ENCODE measurements at regions of chr5 and their contacts with region 1.

Region 1: DNA sequence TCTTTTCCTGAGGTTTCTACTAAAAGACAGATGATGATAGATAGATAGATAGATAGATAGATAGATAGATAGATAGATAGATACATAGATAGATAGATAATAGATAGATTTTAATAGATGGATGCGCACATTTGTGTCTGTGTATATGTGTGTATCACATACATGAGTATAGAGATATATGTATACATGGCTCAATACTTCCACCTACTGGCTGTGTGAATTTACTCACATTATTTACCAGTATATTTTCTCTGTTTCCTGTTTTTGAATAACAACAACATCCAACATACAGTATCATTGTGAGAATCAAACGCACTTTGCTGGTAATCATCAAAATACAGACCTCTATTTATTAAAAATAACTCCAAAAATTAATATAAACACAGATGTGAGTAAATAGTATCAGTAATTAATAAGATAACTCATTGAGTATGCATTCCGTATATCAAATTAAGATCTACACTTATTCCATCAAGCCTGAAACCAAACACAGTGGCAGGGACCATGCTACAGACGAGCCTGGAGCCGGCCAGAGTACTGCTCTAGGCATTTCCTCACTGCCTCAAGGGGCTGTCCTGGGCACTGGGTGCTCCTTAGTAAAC is 338.0 kb downstream of the SEMA5A start:
- DNase-seq: no peak
- H3K4me3 ChIP-seq: no peak overlapping the region
- H3K27ac ChIP-seq: no peak overlapping the region
- H3K4me1 ChIP-seq: no peaks in the 10 kb centered on the region
- H3K27me3 ChIP-seq: no peaks in the 10 kb centered on the region
- CTCF ChIP-seq: peak in 4 of 6 experiments; percentile 19 to 79 (median 60)
- POLR2A ChIP-seq: no peak

Region 2: GRCh38 chr5:8756498-8757084 is 451.3 kb before region 1 on chr5:
- intact Hi-C with region 1: loop called (anchors 5 kb)
- DNase-seq: peak; percentile 11 to 38
- H3K4me3 ChIP-seq: no peak overlapping the region
- H3K27ac ChIP-seq: no peak overlapping the region
- H3K4me1 ChIP-seq: no peaks in the 10 kb centered on the region
- H3K27me3 ChIP-seq: no peaks in the 10 kb centered on the region
- CTCF ChIP-seq: peak in 4 of 6 experiments; percentile 24 to 49 (median 43)
- POLR2A ChIP-seq: no peak

Region 3: DNA sequence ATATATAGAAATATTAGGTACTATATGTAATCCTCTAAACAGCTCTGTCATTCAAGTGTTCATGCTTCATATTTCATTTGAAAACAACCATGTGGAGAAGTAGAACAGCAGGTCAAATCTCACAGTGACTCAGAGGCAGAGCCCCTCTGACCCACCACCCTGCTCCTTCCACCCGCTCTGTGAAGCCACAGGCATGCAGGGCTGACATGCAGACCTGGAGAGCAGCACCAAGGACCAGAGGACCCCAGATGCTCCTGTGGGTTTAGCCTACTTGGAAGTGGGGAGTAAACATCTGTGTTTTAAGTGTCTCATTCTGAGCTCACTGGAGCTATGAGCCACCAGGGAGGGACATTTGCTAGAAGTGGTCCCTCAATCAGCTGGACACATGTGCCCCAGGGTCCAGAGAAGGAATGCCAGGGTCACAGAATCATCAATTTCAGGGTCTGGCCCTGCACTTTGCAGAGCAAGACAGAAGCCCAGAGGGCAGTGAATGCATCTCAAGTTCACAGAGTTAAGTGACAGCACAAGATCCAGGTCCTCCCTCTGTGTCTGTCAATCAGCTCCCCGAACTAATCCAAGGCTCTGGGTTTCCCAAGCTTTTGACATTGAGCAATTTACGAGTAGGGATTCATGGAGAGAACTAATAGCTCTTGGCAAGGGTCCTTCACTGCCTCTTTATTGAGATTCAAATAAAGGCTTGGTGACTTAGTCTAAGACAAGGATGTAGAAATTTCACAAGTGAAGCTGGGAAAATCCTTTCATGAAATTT is 103.2 kb before region 1 on chr5:
- intact Hi-C with region 1: no loop called
- DNase-seq: no peak
- H3K4me3 ChIP-seq: no peak overlapping the region
- H3K27ac ChIP-seq: no peak overlapping the region
- H3K4me1 ChIP-seq: no peaks in the 10 kb centered on the region
- H3K27me3 ChIP-seq: no peaks in the 10 kb centered on the region
- CTCF ChIP-seq: no peak
- POLR2A ChIP-seq: no peak

Region 4: GRCh38 chr5:9337928-9338595 is 130.1 kb after region 1 on chr5:
- intact Hi-C with region 1: no loop called
- DNase-seq: no peak
- H3K4me3 ChIP-seq: no peak overlapping the region
- H3K27ac ChIP-seq: no peak overlapping the region
- H3K4me1 ChIP-seq: no peaks in the 10 kb centered on the region
- H3K27me3 ChIP-seq: no peaks in the 10 kb centered on the region
- CTCF ChIP-seq: no peak
- POLR2A ChIP-seq: no peak

Measured in thyroid gland (tissue), 4 donors.